Activated CD4-positive, alpha-beta memory T cell treated with anti-CD3 and anti-CD28 coated beads for 36 hours (primary cell): ENCODE measurements at regions of chr4 and their contacts with region 1.

Region 1: DNA sequence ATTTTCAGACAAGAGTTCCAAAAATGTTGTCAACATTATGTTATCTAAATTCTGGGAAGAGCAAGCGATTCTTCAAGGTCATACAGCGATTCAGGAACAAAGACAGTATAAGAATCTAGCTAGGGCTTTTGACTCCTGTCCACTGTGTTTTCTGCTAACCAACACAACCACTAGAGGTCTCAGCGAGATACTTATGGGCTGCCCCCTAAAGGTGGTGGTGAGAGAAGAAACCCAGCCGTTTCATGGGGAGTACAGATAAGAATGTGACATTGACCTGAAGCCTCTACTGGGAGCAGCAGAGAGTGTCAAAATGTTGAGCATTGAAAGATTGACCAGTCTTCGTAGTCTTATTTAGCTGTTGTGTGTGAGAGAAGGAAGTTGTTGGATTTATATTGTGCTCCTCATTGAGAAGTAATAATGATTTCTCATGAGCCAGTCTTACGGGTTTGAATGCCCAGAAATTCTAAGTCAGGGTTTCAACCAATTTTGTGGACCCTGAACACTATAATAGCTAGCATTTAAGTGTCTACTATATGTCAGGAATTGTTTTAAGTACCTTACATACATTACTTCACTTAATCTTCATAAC is 168.3 kb downstream of the SPRY1 start:
- DNase-seq: peak; percentile 52
- H3K4me3 Mint-ChIP-seq: no peak overlapping the region
- H3K27ac Mint-ChIP-seq: no peak overlapping the region
- H3K4me1 Mint-ChIP-seq: no peaks in the 10 kb centered on the region
- H3K27me3 Mint-ChIP-seq: peaks cover 5% of the 10 kb centered on the region

Region 2: GRCh38 chr4:122003335-122003734 is 1561.5 kb before region 1 on chr4:
- CTCF ChIA-PET with region 1: no interaction called
- POLR2A ChIA-PET with region 1: no interaction called
- intact Hi-C with region 1: no loop called
- DNase-seq: peak; percentile 28
- H3K4me3 Mint-ChIP-seq: no peak overlapping the region
- H3K27ac Mint-ChIP-seq: no peak overlapping the region
- H3K4me1 Mint-ChIP-seq: no peaks in the 10 kb centered on the region
- H3K27me3 Mint-ChIP-seq: peaks cover 7% of the 10 kb centered on the region

Region 3: GRCh38 chr4:123661080-123661737 is 96.4 kb after region 1 on chr4:
- CTCF ChIA-PET with region 1: interaction called, 12 read pairs
- POLR2A ChIA-PET with region 1: no interaction called
- intact Hi-C with region 1: loop called (anchors 2 kb)
- DNase-seq: no peak
- H3K4me3 Mint-ChIP-seq: no peak overlapping the region
- H3K27ac Mint-ChIP-seq: no peak overlapping the region
- H3K4me1 Mint-ChIP-seq: peaks cover 2% of the 10 kb centered on the region
- H3K27me3 Mint-ChIP-seq: peaks cover 11% of the 10 kb centered on the region

Region 4: GRCh38 chr4:123671633-123672404 is 107.0 kb after region 1 on chr4:
- CTCF ChIA-PET with region 1: interaction called, 4 read pairs
- POLR2A ChIA-PET with region 1: no interaction called
- intact Hi-C with region 1: loop called (anchors 2 kb)
- DNase-seq: peak; percentile 55
- H3K4me3 Mint-ChIP-seq: no peak overlapping the region
- H3K27ac Mint-ChIP-seq: no peak overlapping the region
- H3K4me1 Mint-ChIP-seq: peaks cover 21% of the 10 kb centered on the region
- H3K27me3 Mint-ChIP-seq: peaks cover 42% of the 10 kb centered on the region

Region 5: DNA sequence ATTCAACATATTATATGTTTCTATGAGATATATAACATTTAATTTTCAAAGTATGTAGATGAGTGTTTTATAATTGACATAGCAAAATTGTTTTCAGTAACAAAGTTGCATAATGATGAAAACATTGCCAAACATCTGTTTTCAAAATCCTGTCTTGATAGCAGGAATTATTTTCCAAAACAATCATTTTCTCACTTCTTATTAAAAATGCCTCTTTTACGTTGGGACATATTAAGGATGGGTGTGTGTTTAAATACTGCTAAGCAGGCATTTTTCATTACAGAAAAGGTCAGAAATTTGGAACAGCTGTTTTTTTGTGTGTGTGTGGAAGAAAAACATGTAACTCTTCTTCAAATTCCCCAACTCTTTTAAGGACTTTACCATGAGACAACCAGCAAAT is 283.8 kb after region 1 on chr4:
- CTCF ChIA-PET with region 1: no interaction called
- POLR2A ChIA-PET with region 1: no interaction called
- intact Hi-C with region 1: no loop called
- DNase-seq: no peak
- H3K4me3 Mint-ChIP-seq: no peak overlapping the region
- H3K27ac Mint-ChIP-seq: no peak overlapping the region
- H3K4me1 Mint-ChIP-seq: no peaks in the 10 kb centered on the region
- H3K27me3 Mint-ChIP-seq: no peaks in the 10 kb centered on the region

Region 6: GRCh38 chr4:124262211-124263179 is 697.6 kb after region 1 on chr4:
- CTCF ChIA-PET with region 1: no interaction called
- POLR2A ChIA-PET with region 1: no interaction called
- intact Hi-C with region 1: loop called (anchors 5 kb)
- DNase-seq: peak; percentile 29
- H3K4me3 Mint-ChIP-seq: no peak overlapping the region
- H3K27ac Mint-ChIP-seq: no peak overlapping the region
- H3K4me1 Mint-ChIP-seq: no peaks in the 10 kb centered on the region
- H3K27me3 Mint-ChIP-seq: no peaks in the 10 kb centered on the region

Region 7: GRCh38 chr4:124322234-124323065 is 757.6 kb after region 1 on chr4:
- CTCF ChIA-PET with region 1: interaction called, 7 read pairs
- POLR2A ChIA-PET with region 1: no interaction called
- intact Hi-C with region 1: loop called (anchors 10 kb)
- DNase-seq: no peak
- H3K4me3 Mint-ChIP-seq: no peak overlapping the region
- H3K27ac Mint-ChIP-seq: no peak overlapping the region
- H3K4me1 Mint-ChIP-seq: no peaks in the 10 kb centered on the region
- H3K27me3 Mint-ChIP-seq: peaks cover 1% of the 10 kb centered on the region